MCF 10A (cell line): ENCODE measurements at regions of chrX and their contacts with region 1.

Region 1: GRCh38 chrX:123976706-123977316 is 15.3 kb downstream of the STAG2 start:
- DNase-seq: peak; percentile 60
- H3K4me3 Mint-ChIP-seq: no peak overlapping the region
- H3K27ac Mint-ChIP-seq: no peak overlapping the region
- H3K4me1 Mint-ChIP-seq: peaks cover 12% of the 10 kb centered on the region
- H3K27me3 Mint-ChIP-seq: no peaks in the 10 kb centered on the region
- CTCF ChIP-seq: peak; percentile 35

Region 2: GRCh38 chrX:123728016-123728415 is 248.8 kb before region 1 on chrX:
- CTCF ChIA-PET with region 1: no interaction called
- POLR2A ChIA-PET with region 1: no interaction called
- intact Hi-C with region 1: no loop called
- DNase-seq: no peak
- H3K4me3 Mint-ChIP-seq: no peak overlapping the region
- H3K27ac Mint-ChIP-seq: no peak overlapping the region
- H3K4me1 Mint-ChIP-seq: no peaks in the 10 kb centered on the region
- H3K27me3 Mint-ChIP-seq: no peaks in the 10 kb centered on the region
- CTCF ChIP-seq: no peak

Region 3: GRCh38 chrX:123884809-123885408 is 91.9 kb before region 1 on chrX:
- CTCF ChIA-PET with region 1: interaction called, 9 read pairs
- POLR2A ChIA-PET with region 1: interaction called, 3 read pairs
- intact Hi-C with region 1: loop called (anchors 2 kb)
- DNase-seq: peak; percentile 45
- H3K4me3 Mint-ChIP-seq: no peak overlapping the region
- H3K27ac Mint-ChIP-seq: no peak overlapping the region
- H3K4me1 Mint-ChIP-seq: no peaks in the 10 kb centered on the region
- H3K27me3 Mint-ChIP-seq: no peaks in the 10 kb centered on the region
- CTCF ChIP-seq: peak; percentile 34

Region 4: DNA sequence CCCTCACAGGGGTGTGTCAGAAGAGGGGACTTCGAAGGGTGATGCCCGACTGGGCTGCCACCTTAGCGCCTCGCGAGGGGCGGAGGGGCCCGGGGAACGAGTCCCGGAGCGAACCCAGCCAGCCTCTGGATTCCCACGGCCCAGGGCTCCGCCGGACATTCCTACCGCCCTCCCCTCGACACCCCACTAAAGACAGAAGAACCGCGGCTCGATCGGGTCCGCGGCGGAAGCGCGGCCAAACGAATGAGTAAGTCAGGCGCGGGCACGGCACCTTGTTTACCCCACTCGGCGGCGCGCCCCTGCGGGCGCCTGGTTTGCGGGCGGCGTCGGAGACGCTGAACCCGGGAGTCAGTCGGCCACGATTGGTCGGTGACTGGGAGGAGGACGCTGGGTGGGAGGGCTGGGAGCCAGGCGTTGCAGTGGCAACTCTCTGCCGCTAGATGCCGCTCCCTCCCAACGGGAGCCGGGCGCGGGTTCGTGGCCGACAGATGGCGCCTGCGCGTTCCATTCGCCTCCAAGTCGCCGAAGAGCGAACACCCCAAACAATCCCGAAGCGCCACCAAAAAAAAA is 16.7 kb before region 1 on chrX:
- CTCF ChIA-PET with region 1: interaction called, 7 read pairs
- POLR2A ChIA-PET with region 1: interaction called, 9 read pairs
- intact Hi-C with region 1: loop called (anchors 1 kb)
- DNase-seq: peak; percentile 88
- H3K4me3 Mint-ChIP-seq: peak overlapping the region; percentile 92
- H3K27ac Mint-ChIP-seq: peak overlapping the region; percentile 99
- H3K4me1 Mint-ChIP-seq: no peaks in the 10 kb centered on the region
- H3K27me3 Mint-ChIP-seq: no peaks in the 10 kb centered on the region
- CTCF ChIP-seq: peak; percentile 87

Region 5: GRCh38 chrX:124699876-124700275 is 723.1 kb after region 1 on chrX:
- CTCF ChIA-PET with region 1: no interaction called
- POLR2A ChIA-PET with region 1: no interaction called
- intact Hi-C with region 1: no loop called
- DNase-seq: no peak
- H3K4me3 Mint-ChIP-seq: no peak overlapping the region
- H3K27ac Mint-ChIP-seq: no peak overlapping the region
- H3K4me1 Mint-ChIP-seq: no peaks in the 10 kb centered on the region
- H3K27me3 Mint-ChIP-seq: no peaks in the 10 kb centered on the region
- CTCF ChIP-seq: no peak